ENCODE measurements at regions of chr6 and their contacts with region 1.

Region 1: DNA sequence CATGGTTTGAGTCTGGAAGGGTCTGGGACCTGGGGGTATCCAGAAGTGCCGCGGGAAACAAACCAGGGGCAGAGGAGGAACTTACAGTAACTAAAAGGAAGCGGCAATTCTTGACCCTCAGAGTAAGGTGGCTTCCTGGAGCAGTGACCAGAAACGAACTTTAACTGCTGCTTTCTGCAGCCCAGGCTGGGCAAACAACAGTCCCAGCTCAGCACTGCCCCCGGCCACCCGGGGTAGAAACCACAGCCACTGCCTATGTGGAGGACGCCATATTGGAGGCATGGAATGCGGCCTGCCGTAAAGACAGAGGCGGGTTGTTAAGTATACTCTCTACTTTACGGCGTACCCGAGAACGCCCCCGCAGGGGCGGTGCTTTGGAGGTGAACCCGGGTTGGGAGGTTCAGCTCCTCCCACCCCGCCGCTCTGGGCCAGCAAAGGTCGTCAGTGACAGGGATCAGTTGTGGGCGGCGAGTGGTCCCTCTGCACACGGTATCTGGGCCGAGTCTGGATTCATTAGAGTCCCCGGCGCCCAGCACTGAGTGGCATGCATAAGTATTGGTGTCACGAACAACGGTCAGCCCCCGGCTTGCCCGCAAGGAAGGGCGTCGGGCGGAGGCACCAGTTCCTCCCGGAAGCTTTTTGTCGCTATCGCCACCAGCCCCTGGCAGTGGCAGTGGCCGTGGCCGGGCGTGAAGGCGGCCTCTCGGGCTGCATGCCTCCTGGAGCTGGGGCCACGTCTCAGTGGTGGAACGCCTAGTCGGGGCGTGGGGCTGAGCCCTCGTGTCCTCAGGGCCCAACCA is at the start of gene PDSS2:
- DNase-seq: peak; percentile 96 to 99 (median 98)

Region 2: GRCh38 chr6:107114213-107114905 is 345.1 kb before region 1 on chr6:
- intact Hi-C with region 1: loop called (anchors 2 kb)
- DNase-seq: peak; percentile 72 to 96 (median 77)

Region 3: GRCh38 chr6:107209406-107210305 is 249.8 kb before region 1 on chr6:
- intact Hi-C with region 1: no loop called
- DNase-seq: no peak

Region 4: GRCh38 chr6:107318100-107318736 is 141.3 kb before region 1 on chr6:
- intact Hi-C with region 1: loop called (anchors 5 kb)
- DNase-seq: peak in 6 of 10 donors; percentile 17 to 86 (median 34)